MCF 10A (cell line): ENCODE measurements at regions of chr7 and their contacts with region 1.

Region 1: GRCh38 chr7:67364431-67365017 is 367.9 kb downstream of the TYW1 start:
- DNase-seq: no peak
- H3K4me3 Mint-ChIP-seq: no peak overlapping the region
- H3K27ac Mint-ChIP-seq: no peak overlapping the region
- H3K4me1 Mint-ChIP-seq: no peaks in the 10 kb centered on the region
- H3K27me3 Mint-ChIP-seq: no peaks in the 10 kb centered on the region
- CTCF ChIP-seq: no peak

Region 2: DNA sequence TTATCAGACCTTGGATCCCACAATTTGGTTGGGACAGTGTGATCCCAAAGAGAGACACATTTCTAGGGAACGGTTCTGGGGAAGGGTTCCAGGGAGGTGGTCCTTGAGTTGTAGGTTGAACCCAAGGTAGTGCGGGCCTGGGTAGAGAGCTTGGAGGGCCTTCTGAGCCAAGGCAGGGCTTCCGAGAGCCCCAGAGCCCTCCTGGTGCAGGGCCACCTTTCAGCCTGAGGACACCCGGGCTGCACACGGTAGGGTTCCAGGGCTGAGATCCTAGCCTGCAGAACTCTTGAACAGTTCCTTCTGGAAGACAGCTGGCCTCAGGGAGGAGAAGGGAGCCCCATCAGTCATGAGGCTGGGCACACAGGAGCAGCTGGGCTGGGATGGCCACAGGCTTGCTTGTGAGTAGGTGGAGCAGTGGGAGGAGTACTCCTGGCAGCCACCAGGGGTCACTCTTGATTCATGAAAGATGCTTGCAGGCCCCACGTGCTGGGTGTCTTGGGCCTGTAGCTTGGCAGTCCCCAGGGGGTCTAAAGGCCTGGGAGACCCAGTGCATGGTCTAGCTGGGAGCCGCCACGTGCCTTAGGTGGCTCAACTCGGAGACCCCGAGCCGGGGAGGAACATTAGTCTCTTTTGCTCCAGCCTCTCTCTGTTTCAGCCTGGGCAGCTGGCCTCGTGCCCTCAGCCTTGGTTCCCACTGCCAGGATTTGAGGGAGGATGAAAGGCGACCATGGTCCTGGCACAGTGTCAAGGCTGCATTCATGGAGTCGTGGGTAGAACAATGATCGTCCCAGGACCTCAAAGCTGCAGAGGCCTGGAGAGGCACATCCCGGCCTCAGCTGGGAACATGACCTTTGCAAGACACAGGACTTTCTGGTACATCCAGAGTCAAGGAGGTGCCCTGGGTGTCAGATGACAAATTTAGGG is 13.7 kb after region 1 on chr7:
- CTCF ChIA-PET with region 1: interaction called, 12 read pairs
- POLR2A ChIA-PET with region 1: no interaction called
- intact Hi-C with region 1: no loop called
- DNase-seq: peak; percentile 30
- H3K4me3 Mint-ChIP-seq: no peak overlapping the region
- H3K27ac Mint-ChIP-seq: no peak overlapping the region
- H3K4me1 Mint-ChIP-seq: no peaks in the 10 kb centered on the region
- H3K27me3 Mint-ChIP-seq: no peaks in the 10 kb centered on the region
- CTCF ChIP-seq: peak; percentile 84